Left colon (tissue), 2 donors: ENCODE measurements at regions of chr10 and their contacts with region 1.

Region 1: GRCh38 chr10:91493313-91493712 is 83.2 kb downstream of the HECTD2 start:
- DNase-seq: no peak
- ATAC-seq: peak; percentile 49

Region 2: GRCh38 chr10:91551856-91552255 is 58.5 kb after region 1 on chr10:
- intact Hi-C with region 1: loop called in 1 of 2 experiments (anchors 10 kb)
- DNase-seq: peak in 1 of 2 donors; percentile 19
- ATAC-seq: peak; percentile 26

Region 3: DNA sequence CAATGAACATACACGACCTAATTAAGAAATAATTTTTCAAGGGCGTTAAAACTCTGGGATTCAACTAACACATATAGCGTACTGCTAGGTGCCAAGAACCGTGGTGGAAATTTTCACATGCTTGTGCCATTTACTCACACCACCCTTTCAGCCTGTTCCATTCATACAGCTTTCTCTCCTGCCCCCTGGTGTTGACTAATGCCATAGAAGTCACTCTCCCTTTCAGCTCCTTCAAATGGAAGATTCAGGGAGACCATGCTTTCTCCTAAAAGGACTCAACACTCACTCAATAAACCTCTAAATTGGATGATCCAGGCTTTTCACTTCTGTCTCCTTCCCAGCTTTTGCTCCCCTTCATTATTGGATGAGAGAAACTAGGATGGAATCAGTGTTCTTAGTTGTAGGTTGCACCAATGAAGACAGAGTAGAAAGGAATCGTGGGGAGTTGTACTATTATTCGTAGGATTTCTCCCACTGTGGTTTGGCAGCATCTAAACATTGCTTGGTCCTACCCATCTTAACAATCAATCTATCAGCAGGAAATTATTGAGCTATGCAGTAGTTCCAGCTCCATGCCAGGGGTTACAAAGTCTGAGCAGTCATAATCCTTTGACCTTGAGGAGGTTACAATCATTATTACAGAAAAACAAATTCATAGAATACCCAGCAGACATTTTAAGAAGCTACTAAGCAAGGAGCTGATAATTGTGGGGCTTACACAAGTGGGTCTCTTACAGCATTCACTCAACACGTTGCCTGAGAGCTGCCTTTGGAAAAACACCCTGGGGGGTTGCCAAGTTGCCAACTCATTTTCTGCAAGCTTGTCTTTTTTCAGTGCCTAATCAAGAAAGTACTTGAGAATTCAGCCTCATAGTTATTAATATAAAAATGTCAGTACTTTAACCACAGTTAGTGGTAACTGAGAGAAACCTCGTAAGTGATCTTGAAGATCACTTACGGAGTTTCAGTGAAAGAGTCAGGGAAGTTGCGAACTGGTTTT is 142.4 kb after region 1 on chr10:
- intact Hi-C with region 1: loop called in 1 of 2 experiments (anchors 5 kb)
- DNase-seq: peak; percentile 45 to 62
- ATAC-seq: peak; percentile 75

Region 4: DNA sequence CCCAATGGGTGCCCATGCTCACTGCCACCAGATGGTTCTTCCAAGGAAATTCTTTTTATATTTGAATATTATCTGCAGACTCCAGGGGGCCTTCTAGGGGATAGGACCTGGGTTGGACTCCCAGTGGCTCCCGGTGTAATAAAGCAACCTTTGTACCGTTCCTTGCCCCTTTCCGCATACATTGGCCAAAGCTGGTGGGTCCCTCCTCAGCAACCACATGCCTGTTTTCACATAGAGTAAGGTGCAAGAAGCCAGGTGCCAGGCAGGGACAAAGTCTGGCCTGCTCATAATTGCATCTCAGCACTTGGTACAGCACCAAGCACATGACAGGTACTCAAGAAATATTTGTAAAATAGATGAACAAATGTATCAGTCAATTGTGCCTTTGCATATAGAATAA is 186.0 kb after region 1 on chr10:
- intact Hi-C with region 1: no loop called
- DNase-seq: no peak
- ATAC-seq: no peak

Region 5: GRCh38 chr10:91689731-91690168 is 196.4 kb after region 1 on chr10:
- intact Hi-C with region 1: no loop called
- DNase-seq: no peak
- ATAC-seq: no peak